ENCODE measurements at regions of chr5 and their contacts with region 1.

Region 1: DNA sequence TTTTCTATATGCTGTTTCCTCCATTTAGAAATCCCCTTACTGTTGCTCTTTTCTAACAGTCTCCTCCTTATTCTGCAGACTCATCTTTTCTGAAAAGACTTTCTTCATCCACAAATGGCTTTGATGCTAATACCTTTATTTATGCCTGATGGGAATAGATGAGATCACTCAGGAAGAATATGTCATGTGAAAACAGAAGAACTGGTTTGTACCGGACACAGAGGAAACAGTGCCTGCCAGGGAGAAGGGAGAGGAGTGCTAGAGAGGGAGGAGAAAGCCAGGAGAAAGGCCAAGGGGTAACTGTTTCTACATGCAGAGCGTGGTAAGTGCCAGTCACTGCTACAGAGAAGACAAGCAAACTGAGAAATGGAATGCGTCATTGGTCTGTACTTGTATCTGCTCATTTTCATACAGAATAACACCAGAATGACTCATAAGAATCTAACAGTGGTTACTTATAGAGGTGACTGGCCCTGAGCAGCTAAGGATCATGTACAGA is 45.9 kb upstream of the PJA2 start:
- DNase-seq: peak in 6 of 7 donors; percentile 22 to 64 (median 40)
- H3K4me3 ChIP-seq: no peak overlapping the region
- H3K27ac ChIP-seq: peak overlapping the region in 1 of 5 donors; percentile 20
- H3K4me1 ChIP-seq: peaks cover 0 to 7% of the 10 kb centered on the region in 2 donors
- H3K27me3 ChIP-seq: no peaks in the 10 kb centered on the region
- CTCF ChIP-seq: no peak
- POLR2A ChIP-seq: no peak

Region 2: GRCh38 chr5:108634617-108635288 is 820.9 kb before region 1 on chr5:
- intact Hi-C with region 1: loop called in 1 of 2 experiments (anchors 5 kb)
- DNase-seq: no peak
- H3K4me3 ChIP-seq: no peak overlapping the region
- H3K27ac ChIP-seq: no peak overlapping the region
- H3K4me1 ChIP-seq: no peaks in the 10 kb centered on the region
- H3K27me3 ChIP-seq: no peaks in the 10 kb centered on the region
- CTCF ChIP-seq: no peak
- POLR2A ChIP-seq: no peak

Region 3: GRCh38 chr5:109304309-109304708 is 151.3 kb before region 1 on chr5:
- intact Hi-C with region 1: no loop called
- DNase-seq: no peak
- H3K4me3 ChIP-seq: no peak overlapping the region
- H3K27ac ChIP-seq: no peak overlapping the region
- H3K4me1 ChIP-seq: no peaks in the 10 kb centered on the region
- H3K27me3 ChIP-seq: no peaks in the 10 kb centered on the region
- CTCF ChIP-seq: no peak
- POLR2A ChIP-seq: no peak

Region 4: GRCh38 chr5:109656829-109657228 is 201.2 kb after region 1 on chr5:
- intact Hi-C with region 1: no loop called
- DNase-seq: peak; percentile 50 to 83 (median 73)
- H3K4me3 ChIP-seq: no peak overlapping the region
- H3K27ac ChIP-seq: peak overlapping the region in 1 of 5 donors; percentile 51
- H3K4me1 ChIP-seq: peaks cover 9 to 27% of the 10 kb centered on the region in 2 donors
- H3K27me3 ChIP-seq: no peaks in the 10 kb centered on the region
- CTCF ChIP-seq: no peak
- POLR2A ChIP-seq: no peak

Measured in adrenal gland (tissue), 19 donors.